CD4-positive, alpha-beta memory T cell (primary cell): ENCODE measurements at regions of chr12 and their contacts with region 1.

Region 1: DNA sequence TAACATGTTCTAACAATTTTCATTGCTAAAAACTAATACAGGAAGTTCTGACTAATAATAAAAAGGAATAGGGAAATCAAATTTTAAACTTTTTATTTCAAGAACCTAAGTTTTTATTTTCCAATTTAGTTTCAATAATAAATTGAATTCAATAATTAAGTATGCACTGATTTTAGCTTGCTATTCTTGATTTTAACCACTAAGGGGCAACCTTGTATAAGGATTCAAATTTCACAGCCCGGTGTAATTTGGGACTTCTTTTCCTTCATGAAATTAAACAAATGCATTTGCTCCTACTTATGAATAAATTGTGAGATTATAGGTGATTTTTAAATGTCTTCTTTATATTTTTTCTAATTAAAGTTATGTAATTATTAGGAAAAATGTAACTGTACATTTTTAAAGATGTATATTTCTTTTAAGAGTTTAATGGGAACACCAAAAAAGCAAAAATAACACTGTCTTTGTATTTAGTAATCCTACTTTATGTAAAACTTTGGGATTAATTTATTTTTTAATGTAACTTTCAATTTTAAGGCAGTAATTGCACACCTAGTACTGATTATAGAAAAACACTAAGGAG is 241.4 kb upstream of the PDZRN4 start:
- DNase-seq: peak in 3 of 5 donors; percentile 11 to 12 (median 11)
- H3K4me3 ChIP-seq: no peak overlapping the region
- H3K4me3 Mint-ChIP-seq: no peak overlapping the region
- H3K27ac ChIP-seq: no peak overlapping the region
- H3K27ac Mint-ChIP-seq: no peak overlapping the region
- H3K4me1 ChIP-seq: no peaks in the 10 kb centered on the region
- H3K4me1 Mint-ChIP-seq: no peaks in the 10 kb centered on the region
- H3K27me3 ChIP-seq: no peaks in the 10 kb centered on the region
- H3K27me3 Mint-ChIP-seq: peaks cover 0 to 2% of the 10 kb centered on the region in 2 donors

Region 2: GRCh38 chr12:40970320-40970907 is 23.7 kb after region 1 on chr12:
- CTCF ChIA-PET with region 1: no interaction called
- POLR2A ChIA-PET with region 1: no interaction called
- intact Hi-C with region 1: no loop called
- DNase-seq: no peak
- H3K4me3 ChIP-seq: no peak overlapping the region
- H3K4me3 Mint-ChIP-seq: no peak overlapping the region
- H3K27ac ChIP-seq: no peak overlapping the region
- H3K27ac Mint-ChIP-seq: no peak overlapping the region
- H3K4me1 ChIP-seq: no peaks in the 10 kb centered on the region
- H3K4me1 Mint-ChIP-seq: no peaks in the 10 kb centered on the region
- H3K27me3 ChIP-seq: no peaks in the 10 kb centered on the region
- H3K27me3 Mint-ChIP-seq: no peaks in the 10 kb centered on the region

Region 3: DNA sequence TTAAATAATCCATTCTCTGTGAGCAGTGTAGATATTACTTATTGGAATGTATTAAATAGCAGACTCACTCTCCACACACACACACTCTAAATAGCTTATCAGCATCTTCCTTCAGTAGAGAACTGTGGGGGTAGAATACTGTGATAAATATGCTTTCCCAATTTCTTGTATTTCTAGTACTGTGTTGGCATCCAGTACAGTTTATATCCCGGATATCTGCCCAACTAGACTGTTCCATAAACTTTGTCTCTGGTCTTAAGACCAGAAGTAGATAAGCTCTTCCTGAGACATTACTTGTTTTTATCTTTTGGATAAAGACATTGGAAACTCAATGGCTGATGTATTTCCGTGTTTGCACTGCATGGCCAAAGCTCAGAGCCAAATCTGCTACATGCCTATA is 105.3 kb after region 1 on chr12:
- CTCF ChIA-PET with region 1: no interaction called
- POLR2A ChIA-PET with region 1: no interaction called
- intact Hi-C with region 1: no loop called
- DNase-seq: no peak
- H3K4me3 ChIP-seq: no peak overlapping the region
- H3K4me3 Mint-ChIP-seq: no peak overlapping the region
- H3K27ac ChIP-seq: no peak overlapping the region
- H3K27ac Mint-ChIP-seq: no peak overlapping the region
- H3K4me1 ChIP-seq: no peaks in the 10 kb centered on the region
- H3K4me1 Mint-ChIP-seq: no peaks in the 10 kb centered on the region
- H3K27me3 ChIP-seq: no peaks in the 10 kb centered on the region
- H3K27me3 Mint-ChIP-seq: no peaks in the 10 kb centered on the region

Region 4: GRCh38 chr12:42568952-42569915 is 1622.5 kb after region 1 on chr12:
- CTCF ChIA-PET with region 1: interaction called, 3 read pairs
- POLR2A ChIA-PET with region 1: no interaction called
- intact Hi-C with region 1: loop called (anchors 5 kb)
- DNase-seq: no peak
- H3K4me3 ChIP-seq: no peak overlapping the region
- H3K4me3 Mint-ChIP-seq: no peak overlapping the region
- H3K27ac ChIP-seq: no peak overlapping the region
- H3K27ac Mint-ChIP-seq: no peak overlapping the region
- H3K4me1 ChIP-seq: no peaks in the 10 kb centered on the region
- H3K4me1 Mint-ChIP-seq: no peaks in the 10 kb centered on the region
- H3K27me3 ChIP-seq: no peaks in the 10 kb centered on the region
- H3K27me3 Mint-ChIP-seq: peaks cover 0 to 1% of the 10 kb centered on the region in 2 donors